ENCODE measurements at regions of chr11 and their contacts with region 1.

Region 1: GRCh38 chr11:77994412-77995362 is at the start of gene INTS4:
- H3K4me3 Mint-ChIP-seq: peak within 1 kb of the TSS; percentile 79
- H3K27ac Mint-ChIP-seq: peak within 1 kb of the TSS; percentile 87
- H3K4me1 Mint-ChIP-seq: peaks cover 29% of the 10 kb centered on the region
- H3K27me3 Mint-ChIP-seq: no peaks in the 10 kb centered on the region

Region 2: GRCh38 chr11:77637345-77638165 is 357.1 kb before region 1 on chr11 and contains the start of gene CLNS1A:
- intact Hi-C with region 1: loop called (anchors 10 kb)
- H3K4me3 Mint-ChIP-seq: peak within 1 kb of the TSS; percentile 92
- H3K27ac Mint-ChIP-seq: peak within 1 kb of the TSS; percentile 94
- H3K4me1 Mint-ChIP-seq: peaks cover 34% of the 10 kb centered on the region
- H3K27me3 Mint-ChIP-seq: no peaks in the 10 kb centered on the region

Region 3: GRCh38 chr11:77820563-77821348 is 173.9 kb before region 1 on chr11 and contains the starts of genes AAMDC and RSF1:
- intact Hi-C with region 1: loop called (anchors 2 kb)
- H3K4me3 Mint-ChIP-seq: peak within 1 kb of the TSS; percentile 99
- H3K27ac Mint-ChIP-seq: peak within 1 kb of the TSS; percentile 83
- H3K4me1 Mint-ChIP-seq: peaks cover 25% of the 10 kb centered on the region
- H3K27me3 Mint-ChIP-seq: no peaks in the 10 kb centered on the region